Activated CD4-positive, alpha-beta T cell treated with anti-CD3 and anti-CD28 coated beads for 36 hours (primary cell): ENCODE measurements at regions of chr9 and their contacts with region 1.

Region 1: GRCh38 chr9:87950765-87951488 is 23.4 kb downstream of the CDK20 start:
- DNase-seq: no peak
- ATAC-seq: peak; percentile 49
- H3K4me3 Mint-ChIP-seq: no peak overlapping the region
- H3K27ac Mint-ChIP-seq: no peak overlapping the region
- H3K4me1 Mint-ChIP-seq: peaks cover 3% of the 10 kb centered on the region
- H3K27me3 Mint-ChIP-seq: peaks cover 7% of the 10 kb centered on the region

Region 2: GRCh38 chr9:87875831-87876545 is 74.9 kb before region 1 on chr9:
- CTCF ChIA-PET with region 1: no interaction called
- POLR2A ChIA-PET with region 1: no interaction called
- intact Hi-C with region 1: no loop called
- DNase-seq: no peak
- ATAC-seq: no peak
- H3K4me3 Mint-ChIP-seq: no peak overlapping the region
- H3K27ac Mint-ChIP-seq: no peak overlapping the region
- H3K4me1 Mint-ChIP-seq: peaks cover 11% of the 10 kb centered on the region
- H3K27me3 Mint-ChIP-seq: no peaks in the 10 kb centered on the region

Region 3: GRCh38 chr9:88041447-88041846 is 90.5 kb after region 1 on chr9:
- CTCF ChIA-PET with region 1: interaction called, 3 read pairs
- POLR2A ChIA-PET with region 1: no interaction called
- intact Hi-C with region 1: loop called (anchors 2 to 10 kb)
- DNase-seq: no peak
- ATAC-seq: no peak
- H3K4me3 Mint-ChIP-seq: no peak overlapping the region
- H3K27ac Mint-ChIP-seq: no peak overlapping the region
- H3K4me1 Mint-ChIP-seq: no peaks in the 10 kb centered on the region
- H3K27me3 Mint-ChIP-seq: peaks cover 5% of the 10 kb centered on the region

Region 4: DNA sequence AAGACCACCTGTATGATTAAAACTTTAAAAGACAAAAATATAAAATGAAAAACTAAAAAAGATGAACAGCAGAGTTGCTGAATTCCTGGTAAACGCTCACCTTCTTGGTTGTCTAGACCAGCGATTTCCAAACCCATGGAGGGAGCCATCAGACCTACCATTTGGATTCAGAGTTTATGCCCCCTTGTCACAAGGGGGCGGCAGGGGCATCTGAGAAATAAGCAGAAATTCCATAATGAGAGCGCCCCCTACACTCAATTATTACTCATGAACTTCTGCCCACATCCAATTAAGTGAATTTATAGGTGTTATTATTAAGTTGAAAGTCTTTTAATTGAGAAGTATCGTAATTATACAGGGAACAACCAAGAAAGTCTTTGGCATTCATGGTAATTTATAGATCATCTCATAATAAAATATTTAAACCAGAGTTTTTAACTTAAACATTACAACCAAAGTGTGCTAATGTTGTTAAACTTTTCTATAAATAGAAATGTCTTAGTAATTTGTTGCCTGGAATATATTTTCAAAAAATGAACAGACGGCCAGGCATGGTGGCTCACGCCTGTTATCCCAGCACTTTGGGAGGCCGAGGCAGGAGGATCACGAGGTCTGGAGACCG is 222.6 kb after region 1 on chr9:
- CTCF ChIA-PET with region 1: no interaction called
- POLR2A ChIA-PET with region 1: no interaction called
- intact Hi-C with region 1: loop called in 1 of 2 experiments (anchors 2 kb)
- DNase-seq: peak; percentile 67
- ATAC-seq: peak; percentile 55
- H3K4me3 Mint-ChIP-seq: no peak overlapping the region
- H3K27ac Mint-ChIP-seq: no peak overlapping the region
- H3K4me1 Mint-ChIP-seq: peaks cover under 1% of the 10 kb centered on the region
- H3K27me3 Mint-ChIP-seq: peaks cover 4% of the 10 kb centered on the region

Region 5: GRCh38 chr9:88578121-88579054 is 627.5 kb after region 1 on chr9:
- CTCF ChIA-PET with region 1: no interaction called
- POLR2A ChIA-PET with region 1: no interaction called
- intact Hi-C with region 1: loop called (anchors 2 to 10 kb)
- DNase-seq: peak; percentile 84
- ATAC-seq: peak; percentile 73
- H3K4me3 Mint-ChIP-seq: peak overlapping the region; percentile 31
- H3K27ac Mint-ChIP-seq: no peak overlapping the region
- H3K4me1 Mint-ChIP-seq: no peaks in the 10 kb centered on the region
- H3K27me3 Mint-ChIP-seq: peaks cover 13% of the 10 kb centered on the region

Region 6: DNA sequence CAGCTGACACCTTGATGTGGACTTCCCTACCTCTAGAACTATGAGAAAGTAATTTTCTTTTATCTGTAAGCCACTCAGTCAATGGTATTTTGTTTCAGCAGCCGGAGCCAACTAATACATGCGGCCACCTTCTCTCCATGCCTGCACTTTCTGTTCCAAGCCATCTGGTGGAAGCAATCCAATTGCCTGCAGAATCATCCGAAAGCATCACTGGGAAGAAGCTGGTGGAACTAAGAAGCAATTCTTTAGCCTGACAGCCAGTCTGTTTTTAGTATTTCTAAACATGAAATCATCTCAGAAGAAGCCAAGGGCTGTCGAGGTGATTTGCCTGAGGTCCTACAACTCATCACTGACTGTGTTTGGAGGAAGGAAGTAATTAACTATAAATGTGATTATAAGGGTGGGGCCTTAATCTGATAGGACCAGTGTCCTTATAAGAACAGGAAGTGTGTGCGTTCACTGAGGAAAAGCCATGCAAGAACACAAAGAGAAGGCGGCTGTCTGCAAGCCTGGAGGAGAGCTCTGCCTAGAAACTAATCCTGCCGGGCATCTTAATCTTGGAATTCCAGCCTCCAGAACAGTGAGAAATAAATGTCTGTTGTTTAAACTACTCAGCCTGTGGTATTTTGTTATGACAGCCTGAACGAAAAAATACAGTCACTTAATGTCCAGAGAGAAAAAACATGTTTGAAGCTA is 633.1 kb after region 1 on chr9:
- CTCF ChIA-PET with region 1: no interaction called
- POLR2A ChIA-PET with region 1: no interaction called
- intact Hi-C with region 1: loop called (anchors 2 to 10 kb)
- DNase-seq: no peak
- ATAC-seq: no peak
- H3K4me3 Mint-ChIP-seq: no peak overlapping the region
- H3K27ac Mint-ChIP-seq: no peak overlapping the region
- H3K4me1 Mint-ChIP-seq: peaks cover 9% of the 10 kb centered on the region
- H3K27me3 Mint-ChIP-seq: no peaks in the 10 kb centered on the region

Region 7: DNA sequence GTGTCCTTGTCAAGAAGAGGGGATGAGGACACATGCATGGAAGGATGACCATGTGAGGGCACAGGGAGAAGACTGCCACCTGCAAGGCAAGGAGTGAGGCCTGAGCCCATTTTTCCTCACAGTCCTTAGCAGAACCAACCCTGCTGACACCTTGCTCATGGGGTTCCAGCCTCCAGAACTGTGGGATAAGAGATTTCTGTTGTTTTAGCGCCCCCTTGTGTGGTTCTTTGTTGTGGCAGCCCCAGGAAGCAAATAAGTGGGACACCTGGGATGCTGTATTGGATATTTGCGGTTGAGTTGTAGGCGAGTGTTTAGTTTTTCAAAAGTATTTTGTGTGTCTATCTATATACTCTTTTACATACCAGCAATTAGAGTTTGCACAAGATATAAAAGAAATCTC is 790.4 kb after region 1 on chr9:
- CTCF ChIA-PET with region 1: no interaction called
- POLR2A ChIA-PET with region 1: no interaction called
- intact Hi-C with region 1: loop called in 1 of 2 experiments (anchors 2 kb)
- DNase-seq: peak; percentile 48
- ATAC-seq: no peak
- H3K4me3 Mint-ChIP-seq: no peak overlapping the region
- H3K27ac Mint-ChIP-seq: no peak overlapping the region
- H3K4me1 Mint-ChIP-seq: no peaks in the 10 kb centered on the region
- H3K27me3 Mint-ChIP-seq: peaks cover 33% of the 10 kb centered on the region

Region 8: GRCh38 chr9:89000973-89001916 is 1050.3 kb after region 1 on chr9:
- CTCF ChIA-PET with region 1: no interaction called
- POLR2A ChIA-PET with region 1: no interaction called
- intact Hi-C with region 1: loop called in 1 of 2 experiments (anchors 5 kb)
- DNase-seq: peak; percentile 92
- ATAC-seq: peak; percentile 71
- H3K4me3 Mint-ChIP-seq: no peak overlapping the region
- H3K27ac Mint-ChIP-seq: no peak overlapping the region
- H3K4me1 Mint-ChIP-seq: peaks cover 5% of the 10 kb centered on the region
- H3K27me3 Mint-ChIP-seq: peaks cover 16% of the 10 kb centered on the region